ENCODE measurements at regions of chr20 and their contacts with region 1.

Region 1: DNA sequence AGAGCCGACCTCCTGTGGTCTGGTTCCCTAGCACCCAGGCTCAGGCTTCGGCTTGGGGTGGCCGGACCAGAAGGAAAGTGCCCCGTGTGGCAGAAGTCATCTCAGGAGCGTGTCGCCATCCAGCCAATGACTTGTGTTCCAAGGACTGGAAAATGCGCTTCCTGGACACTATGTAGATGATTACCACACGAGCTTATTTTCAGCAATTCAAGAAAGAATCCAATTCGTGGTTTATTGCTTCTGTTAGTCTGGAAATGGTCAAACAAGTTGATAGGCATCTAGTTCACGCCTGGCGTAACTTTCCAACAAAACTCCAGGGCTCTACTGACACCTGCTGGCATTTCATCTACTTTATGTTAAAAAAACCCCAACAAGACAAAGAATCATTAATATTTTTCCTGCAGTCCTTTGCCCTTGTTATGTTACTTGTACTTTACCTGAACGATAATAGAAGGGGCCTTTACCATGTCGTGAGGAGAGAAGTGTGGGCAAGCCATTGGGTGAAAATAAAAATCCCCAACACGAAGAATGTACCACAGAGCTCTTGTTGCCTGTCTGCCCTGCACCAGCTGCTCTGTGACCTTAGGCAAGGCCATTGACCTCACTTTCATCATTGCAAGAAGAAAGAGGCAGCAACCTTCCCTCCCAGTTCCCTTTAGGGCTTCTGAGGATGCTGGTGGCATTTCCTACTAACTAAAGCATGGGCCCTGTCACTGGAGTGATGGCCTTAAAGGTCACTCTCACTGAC is 154.7 kb upstream of the LAMP5 start:
- DNase-seq: no peak
- H3K4me3 ChIP-seq: no peak overlapping the region
- H3K27ac ChIP-seq: peak overlapping the region in 1 of 2 donors; percentile 30
- H3K4me1 ChIP-seq: peaks cover 0 to 17% of the 10 kb centered on the region in 2 donors
- H3K27me3 ChIP-seq: no peaks in the 10 kb centered on the region
- CTCF ChIP-seq: peak; percentile 32 to 58 (median 45)

Region 2: DNA sequence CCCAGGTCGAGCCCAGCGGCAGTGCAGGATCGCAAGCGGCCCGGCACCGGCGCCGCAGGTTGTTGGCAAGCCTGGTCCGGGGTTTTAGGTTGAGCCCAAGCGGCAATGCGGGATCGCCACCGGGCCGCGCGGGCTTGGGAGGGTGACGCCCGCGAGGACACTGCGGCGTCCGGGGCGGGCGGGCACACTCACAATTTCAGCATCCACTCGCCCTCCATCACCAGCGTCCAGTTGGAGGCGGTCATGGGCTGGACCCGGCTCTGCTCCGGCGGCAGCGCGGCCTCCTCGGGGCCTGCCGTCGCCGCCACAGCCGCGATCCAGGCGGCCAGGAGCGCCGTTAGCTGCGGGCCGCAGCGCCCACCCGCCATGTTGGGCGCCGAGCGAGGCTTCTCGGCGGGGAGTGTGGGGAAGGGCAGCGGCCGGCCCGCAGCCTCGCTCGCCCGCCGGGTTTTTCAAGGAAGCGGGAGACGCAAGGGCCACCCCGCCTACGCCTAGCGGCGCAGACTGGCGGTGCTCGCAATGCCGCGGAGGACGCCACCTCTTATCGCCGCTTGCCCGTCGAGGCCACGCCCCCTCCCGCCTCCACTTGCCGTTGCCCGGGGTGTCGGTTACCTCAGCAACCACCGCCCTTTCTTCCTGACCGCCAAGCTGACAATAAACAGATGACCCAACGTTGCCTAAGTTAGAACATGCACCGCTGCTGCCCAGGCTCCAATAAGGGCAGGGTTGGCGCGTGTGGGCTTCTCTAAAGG is 1340.3 kb before region 1 on chr20 and contains the start of gene TMX4:
- intact Hi-C with region 1: loop called (anchors 10 kb)
- DNase-seq: peak; percentile 93 to 98
- H3K4me3 ChIP-seq: peak within 1 kb of the TSS; percentile 74 to 79
- H3K27ac ChIP-seq: peak within 1 kb of the TSS; percentile 96 to 97
- H3K4me1 ChIP-seq: peaks cover 0 to 7% of the 10 kb centered on the region in 2 donors
- H3K27me3 ChIP-seq: no peaks in the 10 kb centered on the region
- CTCF ChIP-seq: peak in 2 of 3 experiments; percentile 25 to 64
- total RNA-seq, gene TMX4: 65.3 TPM

Region 3: DNA sequence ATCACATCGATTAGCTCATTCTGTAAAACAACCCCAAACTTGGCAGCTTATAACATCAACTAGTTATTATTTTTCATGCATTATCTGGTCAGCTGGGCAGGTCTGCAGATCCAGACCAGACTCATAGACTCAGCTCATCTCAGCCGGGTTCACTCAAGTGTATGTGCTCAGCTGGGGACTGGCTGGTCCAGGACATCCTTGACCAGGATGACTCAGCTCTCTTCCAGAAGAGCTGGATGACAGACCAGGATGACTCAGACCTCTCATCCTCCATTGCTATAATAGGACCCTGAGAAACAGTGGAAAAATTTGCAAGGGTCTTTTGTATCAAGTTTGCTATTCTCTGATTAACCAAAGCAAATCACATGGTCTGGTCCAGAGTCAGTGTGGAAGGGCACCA is 603.3 kb before region 1 on chr20:
- intact Hi-C with region 1: loop called (anchors 5 kb)
- DNase-seq: no peak
- H3K4me3 ChIP-seq: no peak overlapping the region
- H3K27ac ChIP-seq: no peak overlapping the region
- H3K4me1 ChIP-seq: no peaks in the 10 kb centered on the region
- H3K27me3 ChIP-seq: no peaks in the 10 kb centered on the region
- CTCF ChIP-seq: no peak

Region 4: DNA sequence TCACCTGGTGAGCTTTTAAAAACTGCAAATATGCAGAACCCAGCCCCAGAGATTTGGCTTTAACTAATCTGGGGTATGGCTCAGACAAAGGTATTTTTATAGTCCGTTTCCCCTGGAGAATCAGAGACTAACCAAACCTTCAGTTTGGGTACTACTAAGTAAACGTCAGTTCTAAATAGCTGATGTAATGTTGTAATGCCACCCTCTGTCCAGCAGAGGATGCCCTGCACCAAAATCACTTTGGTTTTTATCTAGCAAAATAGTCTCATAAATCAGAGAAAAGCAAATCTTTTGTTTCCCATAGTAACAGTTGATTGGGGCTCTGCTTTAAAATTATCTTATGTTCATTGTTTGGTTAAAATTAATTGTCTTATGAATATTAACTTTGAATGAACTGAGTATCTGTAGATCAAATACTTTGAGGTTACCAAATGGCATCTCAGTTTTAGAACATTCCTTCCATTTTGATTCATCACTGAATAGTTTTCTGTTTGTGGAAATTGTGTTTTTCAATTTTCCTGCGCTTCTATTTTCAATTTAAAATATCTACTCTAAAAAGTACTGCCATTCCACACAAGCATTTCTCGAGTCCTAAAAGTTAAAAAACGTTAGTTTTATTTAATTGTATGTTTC is 569.2 kb before region 1 on chr20:
- intact Hi-C with region 1: loop called (anchors 5 kb)
- DNase-seq: peak in 1 of 2 donors; percentile 66
- H3K4me3 ChIP-seq: no peak overlapping the region
- H3K27ac ChIP-seq: no peak overlapping the region
- H3K4me1 ChIP-seq: no peaks in the 10 kb centered on the region
- H3K27me3 ChIP-seq: no peaks in the 10 kb centered on the region
- CTCF ChIP-seq: peak; percentile 79 to 91 (median 88)

Region 5: GRCh38 chr20:9068851-9069663 is 290.7 kb before region 1 on chr20 and contains the start of gene PLCB4:
- intact Hi-C with region 1: loop called (anchors 2 kb)
- DNase-seq: peak in 1 of 2 donors; percentile 68
- H3K4me3 ChIP-seq: peak within 1 kb of the TSS; percentile 67 to 83
- H3K27ac ChIP-seq: peak within 1 kb of the TSS; percentile 85 to 86
- H3K4me1 ChIP-seq: peaks cover 0 to 2% of the 10 kb centered on the region in 2 donors
- H3K27me3 ChIP-seq: no peaks in the 10 kb centered on the region
- CTCF ChIP-seq: no peak
- total RNA-seq, gene PLCB4: 38.0 TPM

Region 6: GRCh38 chr20:9235518-9235917 is 124.2 kb before region 1 on chr20:
- intact Hi-C with region 1: no loop called
- DNase-seq: no peak
- H3K4me3 ChIP-seq: no peak overlapping the region
- H3K27ac ChIP-seq: no peak overlapping the region
- H3K4me1 ChIP-seq: no peaks in the 10 kb centered on the region
- H3K27me3 ChIP-seq: no peaks in the 10 kb centered on the region
- CTCF ChIP-seq: no peak

Region 7: DNA sequence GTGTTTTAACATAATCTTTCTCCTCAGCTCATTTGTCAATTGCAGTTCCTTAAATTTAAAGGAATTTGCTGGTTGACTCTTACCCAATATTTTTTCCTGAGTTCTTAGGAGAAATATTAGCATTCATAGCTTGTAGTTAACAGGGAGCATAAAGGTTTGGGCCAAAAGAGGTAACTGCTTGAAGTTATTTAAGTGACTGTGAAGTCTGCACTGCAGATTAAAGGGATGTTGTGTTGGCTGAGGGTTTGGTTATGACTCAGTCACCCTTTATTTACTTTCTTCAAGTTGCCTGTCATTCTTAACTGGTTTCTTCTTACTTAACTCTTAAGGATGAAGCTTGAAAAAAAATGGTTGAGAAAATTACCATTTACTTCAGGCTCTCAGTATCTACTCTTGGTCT is 65.7 kb before region 1 on chr20:
- intact Hi-C with region 1: no loop called
- DNase-seq: no peak
- H3K4me3 ChIP-seq: no peak overlapping the region
- H3K27ac ChIP-seq: no peak overlapping the region
- H3K4me1 ChIP-seq: no peaks in the 10 kb centered on the region
- H3K27me3 ChIP-seq: no peaks in the 10 kb centered on the region
- CTCF ChIP-seq: no peak

Region 8: DNA sequence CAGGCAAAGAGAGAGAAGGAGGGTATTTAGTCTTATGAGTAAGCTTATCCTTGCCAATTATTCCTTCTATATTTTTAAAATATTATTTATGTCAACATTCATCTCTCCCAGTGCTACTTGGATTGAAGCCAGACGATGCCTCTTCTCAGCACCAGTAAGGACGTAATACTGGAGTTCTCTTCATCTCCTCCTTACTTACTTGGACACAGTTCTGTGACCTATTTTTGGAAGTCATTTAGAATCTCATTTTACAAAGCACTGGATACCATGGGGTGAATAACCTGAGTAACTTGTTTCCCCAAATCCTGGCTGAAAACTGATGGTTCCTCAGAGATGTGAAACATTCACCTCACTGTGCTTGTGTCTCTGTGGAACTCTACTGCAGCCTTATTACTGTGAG is 17.3 kb after region 1 on chr20:
- intact Hi-C with region 1: no loop called
- DNase-seq: no peak
- H3K4me3 ChIP-seq: no peak overlapping the region
- H3K27ac ChIP-seq: no peak overlapping the region
- H3K4me1 ChIP-seq: peaks cover 3 to 27% of the 10 kb centered on the region in 2 donors
- H3K27me3 ChIP-seq: no peaks in the 10 kb centered on the region
- CTCF ChIP-seq: no peak

Region 9: DNA sequence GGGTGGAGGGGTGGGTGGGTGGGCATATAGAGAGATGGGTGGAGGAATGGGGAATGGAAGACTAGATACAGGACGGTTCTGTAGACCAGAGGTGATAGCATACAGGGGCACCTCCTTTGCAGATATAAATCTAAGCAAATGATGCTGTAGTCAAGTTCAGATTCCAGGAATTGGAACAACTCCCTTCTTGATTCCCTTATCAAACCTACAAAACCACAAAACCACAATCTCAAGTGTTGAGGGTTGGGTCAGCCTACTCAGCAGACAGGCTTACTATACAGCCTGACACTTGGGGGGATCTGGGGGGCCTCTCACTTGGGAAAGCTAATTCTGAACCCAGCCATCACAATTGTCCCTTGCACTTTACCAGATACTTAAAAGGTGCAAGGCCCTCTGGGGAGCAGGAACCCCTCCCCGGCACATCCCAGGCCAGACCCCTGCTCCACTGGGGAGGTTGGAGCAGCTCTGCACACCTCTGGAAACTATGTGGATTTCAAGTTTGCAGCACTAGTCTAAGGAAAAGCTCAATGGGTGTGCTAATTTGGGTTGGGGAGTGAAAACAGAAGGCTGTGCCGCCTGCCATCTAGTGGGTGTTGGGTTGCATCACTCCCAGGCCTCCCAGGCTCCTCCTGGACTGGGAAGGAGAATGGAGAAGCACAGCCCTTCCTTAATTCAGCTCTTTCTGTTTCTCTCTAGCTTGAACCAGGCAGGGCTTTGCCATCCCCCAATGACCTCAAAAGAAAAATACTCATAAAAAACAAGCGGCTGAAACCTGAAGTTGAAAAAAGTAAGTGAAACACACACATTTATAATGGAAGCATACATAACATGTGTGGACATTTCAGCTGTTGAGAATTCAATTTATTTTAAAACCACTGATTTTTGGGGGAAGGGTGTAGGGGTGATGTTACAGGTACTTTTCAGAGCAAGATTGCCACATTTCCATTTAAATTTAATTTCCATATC is 33.4 kb after region 1 on chr20:
- intact Hi-C with region 1: loop called (anchors 5 kb)
- DNase-seq: peak; percentile 32 to 81
- H3K4me3 ChIP-seq: no peak overlapping the region
- H3K27ac ChIP-seq: no peak overlapping the region
- H3K4me1 ChIP-seq: peaks cover 0 to 16% of the 10 kb centered on the region in 2 donors
- H3K27me3 ChIP-seq: no peaks in the 10 kb centered on the region
- CTCF ChIP-seq: peak; percentile 53 to 80 (median 60)